ENCODE measurements at regions of chr12 and their contacts with region 1.

Region 1: DNA sequence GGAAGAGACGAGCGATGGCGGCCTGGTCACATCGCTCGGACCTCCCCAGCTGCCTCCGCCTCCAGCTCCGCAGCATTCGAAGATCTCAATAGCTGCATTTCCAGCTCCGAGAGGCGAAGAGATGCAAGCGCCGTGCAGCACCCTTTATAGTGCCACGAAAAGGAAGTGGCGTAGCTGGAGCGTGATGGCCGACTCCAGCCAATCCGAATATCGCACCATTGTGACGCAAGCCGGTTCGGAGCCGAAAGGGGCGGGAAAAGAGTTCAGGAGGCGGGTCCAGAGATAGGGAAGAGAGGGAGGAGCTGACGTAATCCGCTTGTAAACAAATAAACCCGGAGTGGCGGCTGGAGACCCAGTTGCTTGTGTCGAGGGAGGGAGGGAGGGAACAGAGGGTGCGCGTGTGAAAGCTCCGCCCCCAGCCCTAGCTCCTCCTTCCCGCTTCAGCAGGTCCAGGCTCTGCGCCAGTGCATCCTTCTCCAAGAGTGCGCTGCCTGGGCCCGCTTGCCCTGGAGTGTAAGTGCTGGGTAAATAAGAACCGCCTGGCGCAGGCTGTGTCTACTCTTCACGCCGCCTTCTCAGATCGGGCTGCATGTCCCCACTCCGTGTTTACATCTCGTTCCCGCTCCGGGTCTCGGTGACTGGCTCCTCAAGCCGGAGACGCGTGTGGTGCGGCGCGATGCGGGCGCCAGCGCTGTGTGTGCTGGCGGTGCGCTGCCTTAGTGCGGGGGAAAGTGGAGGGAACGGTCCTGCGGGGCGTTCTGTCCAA is at the start of gene BTG1:
- DNase-seq: peak; percentile 100
- ATAC-seq: peak; percentile 85
- H3K4me3 ChIP-seq: peak within 1 kb of the TSS; percentile 88
- H3K27ac ChIP-seq: peak within 1 kb of the TSS; percentile 92
- H3K4me1 ChIP-seq: no peaks in the 10 kb centered on the region
- H3K27me3 ChIP-seq: no peaks in the 10 kb centered on the region
- CTCF ChIP-seq: 0 out of 2 replicates have a peak, but pooled peaks have one; percentile 7
- POLR2A ChIP-seq: peak; percentile 100
- RAD21 ChIP-seq: peak; percentile 32
- total RNA-seq, gene BTG1: 3.8 and 8.1 TPM in 2 replicates

Region 2: DNA sequence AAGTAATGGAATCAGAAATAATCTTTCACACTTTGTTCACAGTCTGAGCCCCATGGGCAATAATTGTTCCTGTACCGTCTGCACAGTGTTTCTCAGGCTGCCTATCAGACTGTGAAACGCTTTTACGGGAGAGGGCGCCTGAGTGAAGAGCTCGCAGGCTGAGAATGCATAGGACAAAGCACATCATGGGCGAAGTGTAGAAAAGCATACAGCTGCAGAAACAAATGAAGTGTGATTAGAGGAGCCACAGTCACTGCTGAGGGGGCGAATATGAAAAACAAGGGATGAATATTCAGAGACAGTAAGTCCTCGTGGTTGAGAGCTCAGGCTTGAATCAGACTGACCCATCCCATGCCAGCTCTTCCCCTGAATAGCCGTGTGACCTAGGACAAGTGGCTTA is 524.9 kb before region 1 on chr12:
- CTCF ChIA-PET with region 1: no interaction called
- POLR2A ChIA-PET with region 1: no interaction called
- dilution Hi-C with region 1: no loop called
- in situ Hi-C with region 1: no loop called
- intact Hi-C with region 1: loop called (anchors 2 kb)
- DNase-seq: peak; percentile 12
- ATAC-seq: peak; percentile 85
- H3K4me3 ChIP-seq: no peak overlapping the region
- H3K27ac ChIP-seq: no peak overlapping the region
- H3K4me1 ChIP-seq: no peaks in the 10 kb centered on the region
- H3K27me3 ChIP-seq: no peaks in the 10 kb centered on the region; the same call in 1 of the 2 replicates
- CTCF ChIP-seq: no peak; the same call in 1 of the 2 replicates
- POLR2A ChIP-seq: no peak
- RAD21 ChIP-seq: no peak

Region 3: GRCh38 chr12:91883781-91884180 is 262.1 kb before region 1 on chr12:
- CTCF ChIA-PET with region 1: interaction called, 3 read pairs
- POLR2A ChIA-PET with region 1: no interaction called
- dilution Hi-C with region 1: no loop called
- in situ Hi-C with region 1: no loop called
- intact Hi-C with region 1: loop called (anchors 5 kb)
- DNase-seq: peak; percentile 10
- ATAC-seq: no peak
- H3K4me3 ChIP-seq: no peak overlapping the region
- H3K27ac ChIP-seq: no peak overlapping the region
- H3K4me1 ChIP-seq: no peaks in the 10 kb centered on the region
- H3K27me3 ChIP-seq: no peaks in the 10 kb centered on the region
- CTCF ChIP-seq: no peak
- POLR2A ChIP-seq: no peak
- RAD21 ChIP-seq: no peak

Region 4: GRCh38 chr12:92297932-92298696 is 152.2 kb after region 1 on chr12:
- CTCF ChIA-PET with region 1: no interaction called
- POLR2A ChIA-PET with region 1: interaction called, 5 read pairs
- dilution Hi-C with region 1: no loop called
- in situ Hi-C with region 1: no loop called
- intact Hi-C with region 1: loop called (anchors 5 kb)
- DNase-seq: peak; percentile 80
- ATAC-seq: peak; percentile 55
- H3K4me3 ChIP-seq: no peak overlapping the region
- H3K27ac ChIP-seq: peak overlapping the region; percentile 79
- H3K4me1 ChIP-seq: peaks cover 14% of the 10 kb centered on the region
- H3K27me3 ChIP-seq: no peaks in the 10 kb centered on the region
- CTCF ChIP-seq: no peak
- POLR2A ChIP-seq: no peak
- RAD21 ChIP-seq: no peak

Region 5: GRCh38 chr12:92570056-92570753 is 424.3 kb after region 1 on chr12:
- CTCF ChIA-PET with region 1: no interaction called
- POLR2A ChIA-PET with region 1: interaction called, 4 read pairs
- dilution Hi-C with region 1: no loop called
- in situ Hi-C with region 1: loop called (anchors 5 kb)
- intact Hi-C with region 1: loop called (anchors 1 kb)
- DNase-seq: peak; percentile 86
- ATAC-seq: peak; percentile 65
- H3K4me3 ChIP-seq: no peak overlapping the region
- H3K27ac ChIP-seq: no peak overlapping the region
- H3K4me1 ChIP-seq: no peaks in the 10 kb centered on the region
- H3K27me3 ChIP-seq: no peaks in the 10 kb centered on the region
- CTCF ChIP-seq: peak; percentile 77
- POLR2A ChIP-seq: no peak
- RAD21 ChIP-seq: peak; percentile 87